ENCODE measurements at regions of chr6 and their contacts with region 1.

Region 1: GRCh38 chr6:135183532-135184440 is 2.7 kb downstream of the MYB start:
- DNase-seq: peak; percentile 93
- ATAC-seq: peak; percentile 45
- H3K4me3 Mint-ChIP-seq: peak overlapping the region; percentile 99
- H3K27ac Mint-ChIP-seq: peak overlapping the region; percentile 97
- H3K4me1 Mint-ChIP-seq: peaks cover 33% of the 10 kb centered on the region
- H3K27me3 Mint-ChIP-seq: no peaks in the 10 kb centered on the region
- CTCF ChIP-seq: peak; percentile 83

Region 2: GRCh38 chr6:135014353-135014832 is 169.4 kb before region 1 on chr6:
- CTCF ChIA-PET with region 1: interaction called, 4 read pairs
- POLR2A ChIA-PET with region 1: interaction called, 6 read pairs
- intact Hi-C with region 1: loop called (anchors 5 kb)
- DNase-seq: peak; percentile 50
- ATAC-seq: peak; percentile 92
- H3K4me3 Mint-ChIP-seq: peak overlapping the region; percentile 50
- H3K27ac Mint-ChIP-seq: peak overlapping the region; percentile 83
- H3K4me1 Mint-ChIP-seq: peaks cover 64% of the 10 kb centered on the region
- H3K27me3 Mint-ChIP-seq: no peaks in the 10 kb centered on the region
- CTCF ChIP-seq: no peak

Region 3: GRCh38 chr6:135088818-135089809 is 94.7 kb before region 1 on chr6:
- CTCF ChIA-PET with region 1: interaction called, 24 read pairs
- POLR2A ChIA-PET with region 1: interaction called, 60 read pairs
- intact Hi-C with region 1: loop called (anchors 2 kb)
- DNase-seq: peak; percentile 67
- ATAC-seq: peak; percentile 78
- H3K4me3 Mint-ChIP-seq: peak overlapping the region; percentile 43
- H3K27ac Mint-ChIP-seq: peak overlapping the region; percentile 89
- H3K4me1 Mint-ChIP-seq: peaks cover 86% of the 10 kb centered on the region
- H3K27me3 Mint-ChIP-seq: no peaks in the 10 kb centered on the region
- CTCF ChIP-seq: peak; percentile 93

Region 4: GRCh38 chr6:135128268-135128914 is 55.4 kb before region 1 on chr6:
- CTCF ChIA-PET with region 1: interaction called, 7 read pairs
- POLR2A ChIA-PET with region 1: interaction called, 15 read pairs
- intact Hi-C with region 1: no loop called
- DNase-seq: peak; percentile 88
- ATAC-seq: peak; percentile 91
- H3K4me3 Mint-ChIP-seq: peak overlapping the region; percentile 52
- H3K27ac Mint-ChIP-seq: peak overlapping the region; percentile 97
- H3K4me1 Mint-ChIP-seq: peaks cover 56% of the 10 kb centered on the region
- H3K27me3 Mint-ChIP-seq: no peaks in the 10 kb centered on the region
- CTCF ChIP-seq: no peak

Region 5: DNA sequence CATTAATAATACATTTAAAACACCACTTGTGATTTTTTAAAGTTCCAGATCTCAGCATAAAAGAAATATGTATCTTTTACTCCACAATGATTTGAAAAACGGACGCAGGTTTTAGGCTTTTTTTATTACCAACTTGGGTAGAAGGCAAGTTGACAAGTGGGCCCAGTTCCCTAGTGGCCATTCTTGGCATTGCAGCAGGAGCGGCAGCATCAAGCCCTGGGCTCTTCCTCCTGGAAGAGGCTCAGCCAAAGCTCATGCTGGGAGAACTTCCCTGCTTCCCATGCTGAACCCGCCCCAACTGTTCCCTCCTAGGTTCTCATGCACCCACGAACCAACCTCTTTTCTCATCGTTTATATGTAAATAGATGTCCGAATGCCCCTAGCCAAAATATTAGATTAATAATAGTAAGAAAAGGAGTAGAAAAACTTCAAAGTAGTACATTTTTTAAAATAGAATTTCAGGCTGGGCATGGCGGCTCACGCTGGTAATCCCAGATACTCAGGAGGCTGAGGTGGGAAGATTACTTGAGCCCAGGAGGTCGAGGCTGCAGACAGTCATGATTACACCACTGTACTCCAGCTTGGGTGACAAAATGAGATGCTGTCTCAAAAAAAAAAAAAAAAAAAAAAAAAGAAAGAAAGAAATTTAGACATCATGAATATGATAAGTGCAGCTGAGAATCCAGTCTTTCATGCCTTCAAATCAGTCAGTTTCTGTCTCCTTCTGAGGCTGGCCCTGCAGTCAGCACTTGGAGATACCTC is 20.9 kb before region 1 on chr6:
- CTCF ChIA-PET with region 1: interaction called, 24 read pairs
- POLR2A ChIA-PET with region 1: interaction called, 94 read pairs
- intact Hi-C with region 1: loop called (anchors 2 kb)
- DNase-seq: peak; percentile 66
- ATAC-seq: no peak
- H3K4me3 Mint-ChIP-seq: peak overlapping the region; percentile 51
- H3K27ac Mint-ChIP-seq: peak overlapping the region; percentile 97
- H3K4me1 Mint-ChIP-seq: peaks cover 61% of the 10 kb centered on the region
- H3K27me3 Mint-ChIP-seq: no peaks in the 10 kb centered on the region
- CTCF ChIP-seq: peak; percentile 98

Region 6: DNA sequence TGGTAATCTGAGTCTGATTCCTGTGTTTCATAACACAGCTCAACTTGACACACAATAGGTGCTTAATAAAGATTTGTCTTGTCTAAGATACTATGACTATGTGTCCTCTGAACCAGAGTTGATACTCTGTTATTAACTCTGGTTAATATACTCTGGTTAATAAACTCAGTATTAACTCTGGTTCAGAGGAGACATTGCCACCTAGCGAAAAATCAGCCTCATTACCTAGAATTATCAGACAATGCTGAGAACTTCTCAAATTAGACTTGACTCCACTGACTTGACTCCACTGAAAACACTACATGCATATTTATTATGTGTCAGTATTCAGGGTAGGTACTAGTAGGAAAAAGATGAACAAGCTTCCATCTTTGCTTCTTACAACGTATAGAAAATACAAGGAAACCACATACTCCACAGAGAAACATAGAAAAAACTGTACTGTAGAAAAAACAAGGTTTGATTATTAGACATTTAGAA is 239.9 kb after region 1 on chr6:
- CTCF ChIA-PET with region 1: interaction called, 13 read pairs
- POLR2A ChIA-PET with region 1: no interaction called
- intact Hi-C with region 1: no loop called
- DNase-seq: no peak
- ATAC-seq: peak; percentile 55
- H3K4me3 Mint-ChIP-seq: no peak overlapping the region
- H3K27ac Mint-ChIP-seq: no peak overlapping the region
- H3K4me1 Mint-ChIP-seq: peaks cover 2% of the 10 kb centered on the region
- H3K27me3 Mint-ChIP-seq: no peaks in the 10 kb centered on the region
- CTCF ChIP-seq: peak; percentile 89

Region 7: GRCh38 chr6:135521431-135521830 is 337.6 kb after region 1 on chr6:
- CTCF ChIA-PET with region 1: no interaction called
- POLR2A ChIA-PET with region 1: no interaction called
- intact Hi-C with region 1: no loop called
- DNase-seq: no peak
- ATAC-seq: no peak
- H3K4me3 Mint-ChIP-seq: no peak overlapping the region
- H3K27ac Mint-ChIP-seq: no peak overlapping the region
- H3K4me1 Mint-ChIP-seq: peaks cover 7% of the 10 kb centered on the region
- H3K27me3 Mint-ChIP-seq: no peaks in the 10 kb centered on the region
- CTCF ChIP-seq: no peak

Region 8: GRCh38 chr6:135616655-135617054 is 432.9 kb after region 1 on chr6:
- CTCF ChIA-PET with region 1: no interaction called
- POLR2A ChIA-PET with region 1: no interaction called
- intact Hi-C with region 1: no loop called
- DNase-seq: no peak
- ATAC-seq: no peak
- H3K4me3 Mint-ChIP-seq: no peak overlapping the region
- H3K27ac Mint-ChIP-seq: no peak overlapping the region
- H3K4me1 Mint-ChIP-seq: peaks cover 2% of the 10 kb centered on the region
- H3K27me3 Mint-ChIP-seq: no peaks in the 10 kb centered on the region
- CTCF ChIP-seq: no peak

Measured in activated CD8-positive, alpha-beta T cell treated with anti-CD3 and anti-CD28 coated beads for 36 hours (primary cell).